ENCODE measurements at regions of chr10 and their contacts with region 1.

Region 1: DNA sequence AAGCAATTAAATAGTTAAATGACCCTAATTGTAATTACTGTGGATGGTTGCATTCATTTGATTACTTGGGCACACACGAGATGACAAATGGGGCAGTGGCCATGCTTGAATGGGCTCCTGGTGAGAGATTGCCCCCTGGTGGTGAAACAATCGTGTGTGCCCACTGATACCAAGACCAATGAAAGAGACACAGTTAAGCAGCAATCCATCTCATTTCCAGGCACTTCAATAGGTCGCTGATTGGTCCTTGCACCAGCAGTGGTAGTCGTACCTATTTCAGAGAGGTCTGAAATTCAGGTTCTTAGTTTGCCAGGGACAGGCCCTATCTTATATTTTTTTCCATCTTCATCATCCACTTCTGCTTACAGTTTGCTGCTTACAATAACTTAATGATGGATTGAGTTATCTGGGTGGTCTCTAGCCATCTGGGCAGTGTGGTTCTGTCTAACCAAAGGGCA is 8.3 kb downstream of the PCBD1 start:
- DNase-seq: peak; percentile 68
- ATAC-seq: peak; percentile 95
- H3K4me3 ChIP-seq: no peak overlapping the region
- H3K27ac ChIP-seq: no peak overlapping the region
- H3K4me1 ChIP-seq: no peaks in the 10 kb centered on the region
- H3K27me3 ChIP-seq: no peaks in the 10 kb centered on the region
- CTCF ChIP-seq: peak; percentile 85 to 96 (median 89); a peak in 5 of 6 replicates
- POLR2A ChIP-seq: no peak
- RAD21 ChIP-seq: peak; percentile 92

Region 2: DNA sequence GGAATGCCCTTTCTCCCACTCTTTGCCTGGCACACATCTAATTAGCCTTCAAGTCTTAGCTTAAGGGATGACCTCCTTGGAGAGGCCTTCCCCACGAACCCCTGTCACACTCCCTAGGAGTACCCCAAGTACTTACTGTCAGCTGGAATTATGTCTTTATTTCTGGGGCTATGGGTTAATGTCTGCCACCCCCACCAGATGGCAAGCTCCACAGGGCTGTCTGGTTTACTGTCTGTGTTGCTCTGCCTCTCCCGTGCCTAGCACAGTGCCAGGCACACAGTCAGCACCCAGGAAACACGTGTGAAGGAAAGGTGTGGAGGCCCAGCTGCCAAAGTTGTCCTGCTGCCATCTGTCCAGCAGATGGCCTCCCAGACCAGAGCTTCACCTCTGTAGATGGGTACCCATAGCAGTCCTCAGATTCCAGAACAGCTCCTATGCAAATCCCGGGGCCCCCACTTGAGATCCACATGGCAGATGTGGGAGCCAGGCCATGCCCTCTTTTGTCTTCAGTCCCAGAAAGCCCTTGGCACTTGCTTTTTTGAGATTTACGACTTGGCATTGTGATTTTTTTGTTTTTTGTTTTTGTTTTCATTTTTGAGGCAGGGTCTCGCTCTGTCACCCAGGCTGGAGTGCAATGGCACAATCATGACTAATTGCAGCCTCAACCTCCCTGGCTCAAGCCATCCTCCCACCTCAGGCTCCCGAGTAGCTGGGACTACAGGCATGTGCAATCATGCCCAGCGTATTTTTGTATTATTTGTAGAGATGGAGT is 418.7 kb before region 1 on chr10:
- CTCF ChIA-PET with region 1: no interaction called
- POLR2A ChIA-PET with region 1: no interaction called
- RAD21 ChIA-PET with region 1: no interaction called
- intact Hi-C with region 1: loop called (anchors 5 kb)
- DNase-seq: peak; percentile 67
- ATAC-seq: peak; percentile 78
- H3K4me3 ChIP-seq: no peak overlapping the region
- H3K27ac ChIP-seq: no peak overlapping the region
- H3K4me1 ChIP-seq: peaks cover 31 to 54% of the 10 kb centered on the region in 2 experiments
- H3K27me3 ChIP-seq: no peaks in the 10 kb centered on the region
- CTCF ChIP-seq: peak; percentile 86 to 92 (median 88)
- POLR2A ChIP-seq: no peak
- RAD21 ChIP-seq: peak; percentile 99

Region 3: DNA sequence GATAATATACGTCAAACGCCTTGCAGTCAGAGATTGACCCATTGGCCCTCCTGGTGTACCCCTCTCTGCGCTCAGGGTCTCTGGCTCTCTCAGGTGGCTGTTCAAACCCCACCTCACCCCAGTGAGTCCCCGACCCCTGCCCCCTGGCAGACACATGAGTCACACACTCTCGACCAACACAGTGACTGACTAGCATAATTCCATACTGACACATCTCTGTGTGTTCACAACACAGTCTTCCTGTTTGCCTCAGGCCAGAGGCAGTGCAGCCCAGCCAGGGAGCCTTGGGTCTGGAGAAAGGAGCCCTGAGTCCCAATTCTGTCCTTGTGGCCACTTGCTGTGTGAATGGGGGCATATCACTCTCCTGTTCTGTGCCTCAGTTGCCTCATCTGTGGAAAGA is 361.4 kb before region 1 on chr10:
- CTCF ChIA-PET with region 1: no interaction called
- POLR2A ChIA-PET with region 1: no interaction called
- RAD21 ChIA-PET with region 1: no interaction called
- intact Hi-C with region 1: no loop called
- DNase-seq: no peak
- ATAC-seq: peak; percentile 61
- H3K4me3 ChIP-seq: no peak overlapping the region
- H3K27ac ChIP-seq: no peak overlapping the region
- H3K4me1 ChIP-seq: peaks cover 15 to 28% of the 10 kb centered on the region in 2 experiments; a peak in 3 of 4 replicates
- H3K27me3 ChIP-seq: no peaks in the 10 kb centered on the region
- CTCF ChIP-seq: no peak
- POLR2A ChIP-seq: no peak
- RAD21 ChIP-seq: no peak

Region 4: GRCh38 chr10:70549962-70550458 is 330.1 kb before region 1 on chr10:
- CTCF ChIA-PET with region 1: no interaction called
- POLR2A ChIA-PET with region 1: no interaction called
- RAD21 ChIA-PET with region 1: no interaction called
- intact Hi-C with region 1: loop called (anchors 1 kb)
- DNase-seq: peak; percentile 42
- ATAC-seq: peak; percentile 89
- H3K4me3 ChIP-seq: no peak overlapping the region
- H3K27ac ChIP-seq: no peak overlapping the region
- H3K4me1 ChIP-seq: peaks cover 4 to 44% of the 10 kb centered on the region in 2 experiments; a peak in 3 of 4 replicates
- H3K27me3 ChIP-seq: no peaks in the 10 kb centered on the region
- CTCF ChIP-seq: peak; percentile 87 to 94 (median 89)
- POLR2A ChIP-seq: no peak
- RAD21 ChIP-seq: peak; percentile 97

Region 5: DNA sequence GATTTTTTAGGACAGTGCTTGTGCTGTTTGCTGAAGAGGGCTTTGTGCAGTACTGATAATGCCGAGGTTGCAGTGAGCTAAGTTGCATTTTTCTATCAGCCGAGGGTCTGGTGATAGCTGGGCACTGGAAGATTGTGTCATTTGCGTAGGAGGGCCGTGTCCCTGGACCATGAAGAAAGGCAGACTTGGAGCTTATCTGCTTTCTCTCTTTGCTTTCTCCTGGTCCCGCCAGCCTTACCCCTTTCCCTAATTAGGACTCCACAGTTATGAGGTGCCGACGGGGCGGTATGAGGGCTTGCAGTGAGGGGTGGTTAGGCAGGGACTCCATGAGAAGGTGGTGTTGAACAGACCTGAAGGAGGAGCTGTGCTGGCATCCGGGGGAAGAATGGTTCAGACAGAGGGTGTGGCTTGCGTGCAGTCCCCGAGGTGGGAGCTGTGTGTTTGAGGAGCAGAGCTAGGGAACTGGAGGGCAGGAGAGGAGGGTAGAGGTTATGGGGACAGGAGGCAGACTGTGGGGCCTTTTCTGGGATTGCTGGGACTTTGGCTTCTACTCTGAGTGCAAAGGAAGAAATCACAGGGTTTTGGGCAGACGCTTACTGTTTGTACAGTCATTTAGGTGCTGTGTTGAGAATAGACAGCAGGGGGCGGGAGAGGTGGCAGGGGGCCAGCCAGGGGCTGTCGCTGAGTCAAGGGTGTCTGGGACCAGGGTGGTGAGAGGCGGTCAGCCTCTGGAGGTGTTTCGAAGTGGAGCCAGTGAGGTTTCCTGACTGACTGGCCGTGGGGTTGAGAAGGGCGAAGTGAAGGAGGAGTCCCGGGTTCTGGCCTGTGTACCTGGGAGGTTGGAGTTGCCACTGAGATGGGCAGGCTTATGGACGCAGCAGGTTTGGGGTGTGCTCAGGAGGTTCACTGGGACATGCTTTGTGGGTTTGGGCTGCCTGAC is 321.0 kb before region 1 on chr10:
- CTCF ChIA-PET with region 1: no interaction called
- POLR2A ChIA-PET with region 1: no interaction called
- RAD21 ChIA-PET with region 1: no interaction called
- intact Hi-C with region 1: loop called (anchors 2 kb)
- DNase-seq: peak; percentile 65
- ATAC-seq: peak; percentile 92
- H3K4me3 ChIP-seq: peak overlapping the region; percentile 15 to 48
- H3K27ac ChIP-seq: peak overlapping the region; percentile 52
- H3K4me1 ChIP-seq: peaks cover 19 to 86% of the 10 kb centered on the region in 2 experiments
- H3K27me3 ChIP-seq: no peaks in the 10 kb centered on the region
- CTCF ChIP-seq: peak; percentile 51 to 90 (median 66)
- POLR2A ChIP-seq: no peak
- RAD21 ChIP-seq: peak; percentile 73

Region 6: DNA sequence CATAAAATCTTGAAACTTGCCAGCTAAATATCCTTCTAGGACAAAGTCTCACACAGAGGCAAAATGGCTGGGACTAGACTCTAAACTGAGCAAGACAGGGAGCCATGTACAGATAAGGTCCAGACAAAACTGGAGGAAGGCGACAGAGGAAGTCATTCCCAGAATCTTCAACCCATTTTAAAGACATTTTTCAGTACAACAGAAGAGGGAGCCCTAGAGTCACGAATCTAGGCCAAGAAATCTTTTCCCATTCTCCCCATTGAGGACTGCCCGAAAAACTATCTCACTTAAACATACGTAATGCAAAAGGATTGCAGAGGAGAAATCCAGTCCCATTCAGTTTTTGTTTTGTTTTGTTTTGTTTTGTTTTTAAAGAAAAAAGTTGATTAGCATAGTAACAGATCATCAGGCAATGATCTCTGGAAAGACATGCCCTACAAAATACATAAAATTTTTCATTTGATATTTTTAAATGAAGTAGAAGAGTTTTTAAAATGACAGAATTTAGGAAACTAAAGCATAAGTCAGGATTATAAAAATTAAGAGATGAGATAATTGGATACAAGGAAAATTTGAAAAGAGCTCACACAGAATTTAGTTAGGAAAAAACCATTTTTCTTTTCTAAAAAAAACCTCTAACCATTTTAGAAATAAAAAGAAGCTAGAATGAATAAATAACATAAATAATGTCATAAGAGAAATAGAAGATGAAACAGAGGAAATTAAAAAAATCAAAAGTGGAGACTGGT is 260.7 kb before region 1 on chr10:
- CTCF ChIA-PET with region 1: no interaction called
- POLR2A ChIA-PET with region 1: no interaction called
- RAD21 ChIA-PET with region 1: no interaction called
- intact Hi-C with region 1: loop called (anchors 2 kb)
- DNase-seq: peak; percentile 64
- ATAC-seq: peak; percentile 70
- H3K4me3 ChIP-seq: no peak overlapping the region
- H3K27ac ChIP-seq: no peak overlapping the region
- H3K4me1 ChIP-seq: peaks cover 4 to 44% of the 10 kb centered on the region in 2 experiments; a peak in 3 of 4 replicates
- H3K27me3 ChIP-seq: no peaks in the 10 kb centered on the region
- CTCF ChIP-seq: peak; percentile 46 to 63 (median 58); a peak in 4 of 6 replicates
- POLR2A ChIP-seq: no peak
- RAD21 ChIP-seq: peak; percentile 85

Region 7: GRCh38 chr10:70758757-70759514 is 121.2 kb before region 1 on chr10:
- CTCF ChIA-PET with region 1: no interaction called
- POLR2A ChIA-PET with region 1: no interaction called
- RAD21 ChIA-PET with region 1: no interaction called
- intact Hi-C with region 1: loop called (anchors 2 kb)
- DNase-seq: peak; percentile 60
- ATAC-seq: peak; percentile 84
- H3K4me3 ChIP-seq: no peak overlapping the region
- H3K27ac ChIP-seq: no peak overlapping the region
- H3K4me1 ChIP-seq: peaks cover 23 to 53% of the 10 kb centered on the region in 2 experiments
- H3K27me3 ChIP-seq: no peaks in the 10 kb centered on the region
- CTCF ChIP-seq: peak; percentile 72 to 85 (median 76)
- POLR2A ChIP-seq: no peak
- RAD21 ChIP-seq: peak; percentile 93

Region 8: DNA sequence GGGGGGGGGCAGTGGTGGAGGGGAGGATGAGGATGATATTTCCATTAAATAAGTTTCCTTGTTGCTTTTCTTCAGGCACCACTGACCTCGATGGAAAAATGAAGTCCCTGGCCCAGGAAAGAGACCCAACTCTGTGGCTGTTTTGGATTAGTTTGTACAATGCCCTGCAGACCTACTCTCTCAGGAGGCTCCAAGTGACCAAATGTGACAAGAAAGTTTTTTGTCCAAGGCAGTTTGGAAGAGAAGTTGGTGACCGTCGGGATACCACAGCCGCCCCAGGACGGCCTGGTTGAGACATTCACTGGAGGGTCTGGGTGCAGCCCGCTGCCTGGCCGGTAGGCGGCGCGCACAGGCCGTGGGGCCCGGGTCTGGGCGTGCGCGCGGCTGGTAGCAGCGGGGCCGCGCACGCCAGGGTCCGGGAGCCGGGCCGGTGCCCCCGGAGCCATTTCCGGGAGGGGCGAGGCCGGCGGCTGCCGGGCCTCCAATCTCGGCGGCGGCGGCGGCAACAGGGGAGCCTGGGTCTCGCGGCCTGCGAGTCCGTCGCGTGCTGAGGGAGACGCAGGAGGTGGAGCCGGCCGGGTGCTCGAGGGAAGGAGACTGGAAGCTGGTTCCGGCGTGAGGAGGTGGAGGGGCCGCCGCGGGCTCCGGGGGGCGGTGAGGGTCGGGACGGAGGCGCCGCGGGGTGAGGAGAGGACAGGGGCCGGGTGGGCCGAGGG is 64.4 kb before region 1 on chr10 and contains the start of gene SGPL1:
- CTCF ChIA-PET with region 1: no interaction called
- POLR2A ChIA-PET with region 1: no interaction called
- RAD21 ChIA-PET with region 1: no interaction called
- intact Hi-C with region 1: loop called (anchors 1 kb)
- DNase-seq: peak; percentile 55
- ATAC-seq: peak; percentile 82
- H3K4me3 ChIP-seq: peak within 1 kb of the TSS; percentile 77 to 81
- H3K27ac ChIP-seq: peak within 1 kb of the TSS; percentile 89
- H3K4me1 ChIP-seq: peaks cover 9 to 17% of the 10 kb centered on the region in 2 experiments; a peak in 3 of 4 replicates
- H3K27me3 ChIP-seq: no peaks in the 10 kb centered on the region
- CTCF ChIP-seq: peak; percentile 50 to 87 (median 86); a peak in 5 of 6 replicates
- POLR2A ChIP-seq: peak; percentile 27
- RAD21 ChIP-seq: peak; percentile 74
- total RNA-seq, gene SGPL1: 69.4 TPM

Region 9: GRCh38 chr10:70832852-70833528 is 47.1 kb before region 1 on chr10:
- CTCF ChIA-PET with region 1: no interaction called
- POLR2A ChIA-PET with region 1: no interaction called
- RAD21 ChIA-PET with region 1: no interaction called
- intact Hi-C with region 1: no loop called
- DNase-seq: no peak
- ATAC-seq: no peak
- H3K4me3 ChIP-seq: no peak overlapping the region
- H3K27ac ChIP-seq: no peak overlapping the region
- H3K4me1 ChIP-seq: peaks cover 0 to 26% of the 10 kb centered on the region in 2 experiments; a peak in 2 of 4 replicates
- H3K27me3 ChIP-seq: no peaks in the 10 kb centered on the region
- CTCF ChIP-seq: no peak
- POLR2A ChIP-seq: no peak
- RAD21 ChIP-seq: no peak

Measured in HCT116 (cell line).